ENCODE measurements at regions of chr10 and their contacts with region 1.

Region 1: GRCh38 chr10:73413528-73414229 is at the start of gene ANXA7:
- DNase-seq: peak; percentile 95 to 98
- H3K4me3 ChIP-seq: peak within 1 kb of the TSS; percentile 90
- H3K4me3 Mint-ChIP-seq: peak within 1 kb of the TSS; percentile 100
- H3K27ac Mint-ChIP-seq: peak within 1 kb of the TSS; percentile 97
- H3K4me1 ChIP-seq: peaks cover 39% of the 10 kb centered on the region
- H3K4me1 Mint-ChIP-seq: peaks cover 27% of the 10 kb centered on the region
- H3K27me3 ChIP-seq: no peaks in the 10 kb centered on the region
- H3K27me3 Mint-ChIP-seq: no peaks in the 10 kb centered on the region
- CTCF ChIP-seq: peak; percentile 41 to 59
- total RNA-seq, gene ANXA7: 203 and 240 TPM in 2 replicates

Region 2: DNA sequence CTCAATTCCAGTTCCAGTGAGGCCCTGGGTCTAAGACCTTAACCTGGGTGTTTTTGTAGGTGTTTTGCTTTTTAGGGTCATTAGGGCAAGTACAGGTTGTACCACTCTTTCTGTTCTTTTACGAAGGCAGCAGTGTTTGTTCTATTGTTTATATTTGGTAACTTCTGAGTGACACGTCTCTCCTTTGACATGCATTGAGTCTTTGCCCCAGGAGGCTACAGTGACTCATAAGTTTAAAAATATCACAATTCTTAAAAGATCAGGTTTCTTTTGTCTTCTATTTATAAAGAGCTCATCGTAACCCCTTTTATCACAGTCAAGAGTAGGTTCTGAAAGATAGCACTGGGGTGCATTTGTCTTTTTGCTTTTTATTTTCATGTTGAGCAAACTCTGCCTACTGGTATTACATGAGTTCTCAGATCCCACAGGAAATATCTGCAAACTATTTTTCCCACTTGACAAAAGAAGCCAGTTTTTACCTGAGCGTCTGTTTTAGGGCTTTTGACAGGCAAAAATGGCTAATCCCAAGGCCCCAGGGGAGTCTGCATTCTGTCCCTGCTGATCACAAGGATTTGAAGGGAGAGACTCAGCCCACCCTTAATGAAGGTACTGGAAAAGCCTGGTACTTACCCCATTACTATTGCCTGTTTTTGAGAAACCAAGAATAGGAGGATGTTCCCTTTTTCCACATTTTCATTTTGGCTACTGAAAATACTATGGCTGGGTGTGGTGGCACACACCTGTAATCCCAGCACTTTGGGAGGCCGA is 295.5 kb before region 1 on chr10:
- CTCF ChIA-PET with region 1: no interaction called
- POLR2A ChIA-PET with region 1: no interaction called
- intact Hi-C with region 1: no loop called
- DNase-seq: peak in 1 of 2 experiments; percentile 58
- H3K4me3 ChIP-seq: no peak overlapping the region
- H3K4me3 Mint-ChIP-seq: peak overlapping the region; percentile 45
- H3K27ac Mint-ChIP-seq: peak overlapping the region; percentile 45
- H3K4me1 ChIP-seq: peaks cover 26% of the 10 kb centered on the region
- H3K4me1 Mint-ChIP-seq: peaks cover 14% of the 10 kb centered on the region
- H3K27me3 ChIP-seq: no peaks in the 10 kb centered on the region
- H3K27me3 Mint-ChIP-seq: no peaks in the 10 kb centered on the region
- CTCF ChIP-seq: no peak

Region 3: GRCh38 chr10:73252445-73253224 is 161.0 kb before region 1 on chr10 and contains the start of gene MRPS16:
- CTCF ChIA-PET with region 1: no interaction called
- POLR2A ChIA-PET with region 1: interaction called, 9 read pairs
- intact Hi-C with region 1: loop called (anchors 5 kb)
- DNase-seq: peak; percentile 97 to 98
- H3K4me3 ChIP-seq: peak within 1 kb of the TSS; percentile 71
- H3K4me3 Mint-ChIP-seq: peak within 1 kb of the TSS; percentile 94
- H3K27ac Mint-ChIP-seq: peak within 1 kb of the TSS; percentile 99
- H3K4me1 ChIP-seq: peaks cover 9% of the 10 kb centered on the region
- H3K4me1 Mint-ChIP-seq: peaks cover 22% of the 10 kb centered on the region
- H3K27me3 ChIP-seq: no peaks in the 10 kb centered on the region
- H3K27me3 Mint-ChIP-seq: no peaks in the 10 kb centered on the region
- CTCF ChIP-seq: no peak
- total RNA-seq, gene MRPS16: 191 and 194 TPM in 2 replicates

Region 4: GRCh38 chr10:73358331-73359279 is 55.1 kb before region 1 on chr10 and contains the start of gene CFAP70:
- CTCF ChIA-PET with region 1: no interaction called
- POLR2A ChIA-PET with region 1: interaction called, 6 read pairs
- intact Hi-C with region 1: loop called (anchors 5 kb)
- DNase-seq: peak; percentile 97 to 98
- H3K4me3 ChIP-seq: peak within 1 kb of the TSS; percentile 66
- H3K4me3 Mint-ChIP-seq: peak within 1 kb of the TSS; percentile 91
- H3K27ac Mint-ChIP-seq: peak within 1 kb of the TSS; percentile 99
- H3K4me1 ChIP-seq: peaks cover 11% of the 10 kb centered on the region; the same call in 1 of the 2 replicates
- H3K4me1 Mint-ChIP-seq: peaks cover 12% of the 10 kb centered on the region
- H3K27me3 ChIP-seq: no peaks in the 10 kb centered on the region
- H3K27me3 Mint-ChIP-seq: peaks cover 4% of the 10 kb centered on the region
- CTCF ChIP-seq: no peak
- total RNA-seq, gene CFAP70: 0.26 and 0.39 TPM in 2 replicates

Region 5: GRCh38 chr10:73495884-73496674 is 82.4 kb after region 1 on chr10 and contains the start of gene PPP3CB:
- CTCF ChIA-PET with region 1: no interaction called
- POLR2A ChIA-PET with region 1: interaction called, 18 read pairs
- intact Hi-C with region 1: loop called (anchors 1 kb)
- DNase-seq: peak; percentile 93 to 98
- H3K4me3 ChIP-seq: peak within 1 kb of the TSS; percentile 86
- H3K4me3 Mint-ChIP-seq: peak within 1 kb of the TSS; percentile 89
- H3K27ac Mint-ChIP-seq: peak within 1 kb of the TSS; percentile 84
- H3K4me1 ChIP-seq: peaks cover 8% of the 10 kb centered on the region; the same call in 1 of the 2 replicates
- H3K4me1 Mint-ChIP-seq: peaks cover 27% of the 10 kb centered on the region
- H3K27me3 ChIP-seq: no peaks in the 10 kb centered on the region
- H3K27me3 Mint-ChIP-seq: no peaks in the 10 kb centered on the region
- CTCF ChIP-seq: no peak
- total RNA-seq, gene PPP3CB: 41.5 and 44.5 TPM in 2 replicates

Region 6: DNA sequence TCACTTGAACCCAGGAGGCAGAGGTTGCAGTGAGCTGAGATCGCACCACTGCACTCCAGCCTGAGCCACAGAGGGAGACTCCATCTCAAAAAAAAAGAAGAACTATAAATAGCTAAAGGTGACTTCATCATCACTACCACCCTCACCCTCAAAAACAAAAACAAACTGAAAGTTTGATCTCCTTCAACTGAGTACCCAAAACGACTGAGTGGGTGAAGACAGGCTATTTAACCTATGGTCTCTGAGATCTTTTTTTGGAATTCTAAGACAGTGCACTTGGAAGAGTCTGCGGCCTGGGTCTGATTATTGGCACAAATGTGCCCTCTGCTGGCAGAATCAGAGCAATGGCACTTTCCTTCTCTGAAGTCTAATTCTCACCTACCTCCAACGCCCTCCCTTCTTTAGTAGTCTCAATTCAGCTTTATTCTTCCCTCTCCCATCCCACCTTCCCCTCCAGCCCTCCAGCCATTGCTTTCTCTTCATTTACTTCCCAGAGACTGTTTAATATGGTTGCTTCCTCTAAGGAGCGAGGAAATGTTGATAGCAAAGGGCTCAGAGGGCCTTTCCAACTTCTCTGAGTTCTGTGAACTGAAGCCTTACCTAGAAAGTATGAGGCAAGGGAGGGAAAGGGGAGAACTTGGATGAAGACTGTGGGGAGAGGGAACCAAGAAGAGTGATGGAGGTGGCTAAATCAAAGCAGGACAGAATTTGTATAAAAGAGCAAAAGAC is 230.5 kb after region 1 on chr10:
- CTCF ChIA-PET with region 1: interaction called, 3 read pairs
- POLR2A ChIA-PET with region 1: no interaction called
- intact Hi-C with region 1: loop called (anchors 10 kb)
- DNase-seq: peak; percentile 58 to 71
- H3K4me3 ChIP-seq: no peak overlapping the region
- H3K4me3 Mint-ChIP-seq: no peak overlapping the region
- H3K27ac Mint-ChIP-seq: peak overlapping the region; percentile 40
- H3K4me1 ChIP-seq: peaks cover 21% of the 10 kb centered on the region
- H3K4me1 Mint-ChIP-seq: peaks cover 42% of the 10 kb centered on the region
- H3K27me3 ChIP-seq: no peaks in the 10 kb centered on the region
- H3K27me3 Mint-ChIP-seq: no peaks in the 10 kb centered on the region
- CTCF ChIP-seq: peak; percentile 86 to 91

Measured in Caco-2 (cell line).